IMR-90 (cell line): ENCODE measurements at regions of chr20 and their contacts with region 1.

Region 1: GRCh38 chr20:1764136-1765033 is 106.8 kb upstream of the SIRPG start:
- DNase-seq: peak; percentile 86
- ATAC-seq: peak; percentile 97
- H3K4me3 ChIP-seq: no peak overlapping the region
- H3K27ac ChIP-seq: no peak overlapping the region
- H3K4me1 ChIP-seq: peaks cover 2% of the 10 kb centered on the region
- H3K27me3 ChIP-seq: no peaks in the 10 kb centered on the region
- CTCF ChIP-seq: peak; percentile 86
- POLR2A ChIP-seq: no peak
- RAD21 ChIP-seq: peak; percentile 83

Region 2: DNA sequence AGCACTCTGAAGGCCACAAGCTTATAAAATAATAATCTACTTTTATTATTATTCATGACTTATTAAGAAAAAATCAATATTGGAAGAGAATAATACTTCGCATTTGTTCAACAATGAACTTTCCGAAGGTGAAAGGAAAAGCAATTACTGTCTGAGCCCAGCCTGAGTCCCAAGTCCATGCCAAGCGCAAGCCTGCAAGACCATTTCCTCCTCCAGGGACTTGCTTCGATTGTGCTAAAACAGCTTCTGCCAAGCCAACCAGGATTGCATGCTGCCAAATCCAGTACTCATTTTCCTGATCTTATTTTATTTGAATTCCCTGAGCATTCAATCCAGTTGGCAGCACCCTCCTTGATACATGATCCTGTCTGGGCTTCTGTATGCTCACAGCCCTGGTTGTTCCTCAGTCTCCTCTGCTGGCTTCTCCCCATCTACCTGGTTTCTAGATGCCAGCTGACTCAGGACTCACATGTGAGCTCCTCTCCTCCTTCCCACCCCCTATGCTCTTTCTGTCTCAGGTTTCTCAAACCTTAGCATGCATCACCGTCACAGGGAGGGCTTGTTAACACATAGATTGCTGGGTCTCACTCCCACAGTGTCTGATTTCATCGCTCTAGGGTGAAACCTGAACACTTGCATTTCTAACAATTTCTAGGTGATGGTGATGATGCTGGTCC is 701.9 kb before region 1 on chr20:
- CTCF ChIA-PET with region 1: no interaction called
- POLR2A ChIA-PET with region 1: no interaction called
- dilution Hi-C with region 1: no loop called
- in situ Hi-C with region 1: no loop called
- intact Hi-C with region 1: no loop called
- DNase-seq: no peak
- ATAC-seq: no peak
- H3K4me3 ChIP-seq: no peak overlapping the region
- H3K27ac ChIP-seq: no peak overlapping the region
- H3K4me1 ChIP-seq: no peaks in the 10 kb centered on the region
- H3K27me3 ChIP-seq: no peaks in the 10 kb centered on the region; the same call in 1 of the 2 replicates
- CTCF ChIP-seq: no peak
- POLR2A ChIP-seq: no peak
- RAD21 ChIP-seq: no peak

Region 3: DNA sequence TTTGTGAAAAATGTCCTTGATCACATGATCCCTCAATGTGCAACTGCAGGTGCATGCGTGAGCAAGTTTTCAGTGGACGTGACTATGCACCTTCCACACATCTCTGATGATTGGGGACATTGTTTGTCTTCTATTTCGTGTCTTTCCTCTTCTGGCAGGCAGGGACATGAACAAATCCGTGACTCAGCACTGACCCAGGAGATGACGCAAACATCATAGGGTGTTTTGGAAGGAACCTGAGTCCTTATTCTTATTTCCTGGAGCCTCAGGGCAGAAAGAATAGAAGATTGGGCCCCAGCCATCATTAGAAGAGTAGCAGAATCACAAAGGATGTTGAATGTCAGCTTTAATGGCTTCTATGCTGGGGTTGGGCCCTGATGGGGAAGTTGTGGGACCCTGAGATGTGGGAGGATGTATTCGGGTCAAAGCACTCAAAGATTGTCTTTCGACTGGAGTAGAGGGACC is 194.9 kb before region 1 on chr20:
- CTCF ChIA-PET with region 1: no interaction called
- POLR2A ChIA-PET with region 1: no interaction called
- dilution Hi-C with region 1: no loop called
- in situ Hi-C with region 1: no loop called
- intact Hi-C with region 1: no loop called
- DNase-seq: peak; percentile 9
- ATAC-seq: no peak
- H3K4me3 ChIP-seq: no peak overlapping the region
- H3K27ac ChIP-seq: no peak overlapping the region
- H3K4me1 ChIP-seq: no peaks in the 10 kb centered on the region
- H3K27me3 ChIP-seq: no peaks in the 10 kb centered on the region
- CTCF ChIP-seq: no peak
- POLR2A ChIP-seq: no peak
- RAD21 ChIP-seq: no peak

Region 4: GRCh38 chr20:1802385-1803060 is 38.1 kb after region 1 on chr20:
- CTCF ChIA-PET with region 1: interaction called, 3 read pairs
- POLR2A ChIA-PET with region 1: no interaction called
- dilution Hi-C with region 1: no loop called
- in situ Hi-C with region 1: no loop called
- intact Hi-C with region 1: loop called (anchors 1 kb)
- DNase-seq: peak; percentile 76
- ATAC-seq: peak; percentile 68
- H3K4me3 ChIP-seq: peak overlapping the region; percentile 50
- H3K27ac ChIP-seq: no peak overlapping the region
- H3K4me1 ChIP-seq: peaks cover 5% of the 10 kb centered on the region
- H3K27me3 ChIP-seq: peaks cover 2% of the 10 kb centered on the region; the same call in 1 of the 2 replicates
- CTCF ChIP-seq: peak; percentile 77
- POLR2A ChIP-seq: no peak
- RAD21 ChIP-seq: peak; percentile 84

Region 5: DNA sequence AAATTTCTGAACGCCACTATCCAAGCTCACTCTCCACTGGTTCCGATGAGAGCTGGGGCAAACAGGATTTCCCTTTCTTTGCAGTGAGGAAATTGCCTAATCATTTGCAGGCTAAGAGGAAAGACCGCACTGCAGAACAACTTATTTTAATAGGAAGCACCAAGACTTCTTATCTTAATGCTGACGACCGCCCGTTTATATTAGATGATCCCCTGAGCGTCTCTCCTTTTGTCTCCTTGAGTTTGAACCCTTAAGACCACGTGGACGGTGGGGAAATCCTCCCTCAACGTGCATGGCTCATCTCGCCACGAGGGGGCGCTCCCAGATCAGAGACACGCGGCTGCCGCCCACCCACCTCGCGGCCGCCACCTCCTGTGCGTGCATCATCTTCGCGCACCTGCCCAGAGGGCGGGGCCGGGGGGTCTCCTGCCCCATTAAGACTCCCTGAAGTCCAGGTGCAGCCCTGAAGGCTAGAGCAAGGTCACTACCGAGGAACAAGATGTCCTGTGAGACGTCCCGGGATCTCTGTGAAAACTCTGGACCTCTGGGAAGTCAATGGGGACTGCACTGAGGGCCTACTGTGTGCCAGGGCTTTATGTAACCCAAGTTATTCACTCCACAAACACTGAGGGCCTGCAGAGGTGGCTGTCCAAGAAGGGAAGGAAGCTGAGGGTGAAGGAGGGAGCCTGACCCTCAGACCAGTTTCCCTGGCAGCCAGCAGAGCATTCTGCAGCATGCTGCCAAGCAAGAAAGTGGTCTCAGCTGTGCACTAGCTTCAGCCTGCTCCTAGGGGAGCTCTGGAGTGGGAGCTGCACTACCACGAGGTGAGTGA is 201.4 kb after region 1 on chr20:
- CTCF ChIA-PET with region 1: no interaction called
- POLR2A ChIA-PET with region 1: no interaction called
- dilution Hi-C with region 1: no loop called
- in situ Hi-C with region 1: no loop called
- intact Hi-C with region 1: loop called (anchors 1 kb)
- DNase-seq: peak; percentile 54
- ATAC-seq: peak; percentile 83
- H3K4me3 ChIP-seq: no peak overlapping the region
- H3K27ac ChIP-seq: no peak overlapping the region
- H3K4me1 ChIP-seq: no peaks in the 10 kb centered on the region
- H3K27me3 ChIP-seq: peaks cover 60% of the 10 kb centered on the region
- CTCF ChIP-seq: peak; percentile 86
- POLR2A ChIP-seq: no peak
- RAD21 ChIP-seq: peak; percentile 84

Region 6: DNA sequence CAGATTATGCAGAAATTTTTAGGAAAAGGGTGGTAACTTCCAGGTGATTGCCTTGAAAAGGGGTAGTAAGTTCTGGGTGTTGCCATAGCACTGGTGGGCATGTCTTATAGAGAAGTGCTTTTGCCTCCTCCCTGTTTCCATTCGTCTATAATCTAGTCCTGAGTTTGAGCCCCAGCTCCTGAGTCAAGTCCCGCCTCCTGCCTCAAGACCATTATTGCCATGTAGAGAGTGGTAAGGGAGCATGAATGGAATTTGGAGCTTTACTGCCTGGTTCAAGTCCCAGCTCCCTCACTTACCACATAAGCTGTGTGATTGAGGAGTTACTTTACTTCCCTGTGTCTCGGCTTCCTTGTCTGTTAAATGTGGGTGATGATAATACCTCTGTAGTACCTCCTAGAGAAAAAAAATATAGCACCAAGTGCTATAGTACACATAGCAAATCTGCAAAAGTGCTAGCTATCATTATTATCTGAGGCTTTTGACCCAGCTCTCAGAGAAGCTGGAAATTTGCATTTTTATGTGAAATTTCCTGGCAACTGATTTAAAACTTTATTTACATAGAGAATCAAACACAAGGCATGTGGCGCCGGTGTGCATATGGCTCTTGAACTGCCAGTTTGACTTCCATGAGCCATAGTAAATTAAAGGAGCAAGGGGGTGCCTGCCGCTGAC is 652.3 kb after region 1 on chr20:
- CTCF ChIA-PET with region 1: no interaction called
- POLR2A ChIA-PET with region 1: no interaction called
- dilution Hi-C with region 1: no loop called
- in situ Hi-C with region 1: no loop called
- intact Hi-C with region 1: no loop called
- DNase-seq: no peak
- ATAC-seq: no peak
- H3K4me3 ChIP-seq: no peak overlapping the region
- H3K27ac ChIP-seq: no peak overlapping the region
- H3K4me1 ChIP-seq: no peaks in the 10 kb centered on the region
- H3K27me3 ChIP-seq: peaks cover 2% of the 10 kb centered on the region
- CTCF ChIP-seq: no peak
- POLR2A ChIP-seq: no peak
- RAD21 ChIP-seq: no peak

Region 7: DNA sequence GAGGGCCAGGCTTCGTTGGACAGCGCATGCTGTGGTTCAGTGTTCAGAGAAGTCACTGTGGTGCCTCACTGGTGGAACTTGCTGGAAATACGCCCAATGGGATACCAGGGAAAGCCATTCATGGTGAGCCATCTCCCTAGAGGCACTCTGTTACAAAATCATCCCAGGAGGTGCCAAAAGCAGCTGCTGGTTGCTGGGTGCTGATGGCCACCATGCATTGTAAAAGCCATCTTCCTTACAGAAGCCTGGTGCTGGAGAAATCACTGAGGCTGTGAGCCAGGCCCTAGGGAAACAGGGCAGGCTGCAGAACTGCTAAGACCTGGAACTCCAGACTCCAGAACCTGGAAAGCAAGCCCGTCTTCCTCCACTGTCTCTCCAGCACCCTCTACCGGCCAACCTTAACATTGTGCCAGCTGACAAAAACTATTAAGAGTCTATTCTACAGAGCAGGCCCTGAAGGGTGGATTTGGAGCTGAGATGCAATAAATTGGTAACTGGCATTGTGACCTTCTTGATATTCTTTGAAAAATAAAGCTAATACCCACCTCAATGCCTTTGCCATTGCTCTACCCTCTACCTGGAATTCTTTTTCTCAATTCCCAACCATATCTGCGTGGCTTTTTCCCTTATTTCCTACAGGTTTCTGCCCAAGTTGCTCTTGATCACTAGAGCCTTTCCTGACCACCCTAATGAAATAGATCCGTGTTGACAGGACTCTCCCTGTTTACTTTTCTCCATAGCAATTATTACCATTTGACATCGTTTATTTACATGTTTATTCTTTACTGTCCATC is 687.8 kb after region 1 on chr20:
- CTCF ChIA-PET with region 1: no interaction called
- POLR2A ChIA-PET with region 1: no interaction called
- dilution Hi-C with region 1: no loop called
- in situ Hi-C with region 1: loop called (anchors 25 kb)
- intact Hi-C with region 1: loop called (anchors 5 kb)
- DNase-seq: peak; percentile 62
- ATAC-seq: peak; percentile 90
- H3K4me3 ChIP-seq: no peak overlapping the region
- H3K27ac ChIP-seq: no peak overlapping the region
- H3K4me1 ChIP-seq: no peaks in the 10 kb centered on the region
- H3K27me3 ChIP-seq: no peaks in the 10 kb centered on the region
- CTCF ChIP-seq: peak; percentile 79
- POLR2A ChIP-seq: no peak
- RAD21 ChIP-seq: peak; percentile 65